ENCODE measurements at regions of chr1 and their contacts with region 1.

Region 1: DNA sequence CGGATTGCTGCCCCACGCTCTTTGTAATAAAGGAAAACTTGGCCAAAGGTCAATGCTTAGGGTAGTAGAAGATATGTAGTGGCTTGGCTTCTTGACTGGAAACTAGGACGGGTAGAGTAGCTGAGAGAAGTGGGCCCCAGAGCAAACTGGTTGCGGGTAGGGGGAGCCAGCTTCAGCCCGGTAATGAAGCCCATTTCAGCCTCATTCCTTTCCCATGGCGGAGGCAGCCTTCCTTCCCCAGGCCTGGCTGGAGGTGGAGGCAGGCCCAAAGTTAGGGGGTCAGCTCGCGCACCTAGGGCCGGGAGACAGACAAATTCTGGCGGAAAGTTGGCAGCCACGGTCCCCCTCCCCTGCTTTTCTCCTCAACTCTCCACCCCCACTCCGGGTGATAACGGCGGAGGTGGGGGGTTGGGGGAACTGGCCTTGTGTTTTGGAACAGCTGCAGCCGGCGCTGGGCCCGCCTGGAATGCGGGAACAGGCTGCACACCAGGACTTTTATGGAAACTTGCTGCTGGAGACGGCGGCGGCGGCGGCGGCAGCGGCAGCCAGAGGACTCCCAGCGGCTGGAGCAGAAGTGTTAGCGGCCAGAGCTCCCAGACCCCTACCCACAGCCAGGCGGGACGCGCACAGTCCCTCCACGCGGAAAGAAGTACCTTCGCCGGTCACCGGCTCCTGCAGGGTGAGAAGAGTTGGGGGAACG is at the start of gene NEXN:
- DNase-seq: peak; percentile 80
- H3K4me3 ChIP-seq: peak within 1 kb of the TSS; percentile 85 to 96 (median 88)
- H3K27ac ChIP-seq: peak within 1 kb of the TSS; percentile 96
- H3K4me1 ChIP-seq: peaks cover 19% of the 10 kb centered on the region
- H3K27me3 ChIP-seq: no peaks in the 10 kb centered on the region
- CTCF ChIP-seq: no peak
- POLR2A ChIP-seq: no peak
- total RNA-seq, gene NEXN: 11.7 and 14.2 TPM in 2 replicates

Region 2: DNA sequence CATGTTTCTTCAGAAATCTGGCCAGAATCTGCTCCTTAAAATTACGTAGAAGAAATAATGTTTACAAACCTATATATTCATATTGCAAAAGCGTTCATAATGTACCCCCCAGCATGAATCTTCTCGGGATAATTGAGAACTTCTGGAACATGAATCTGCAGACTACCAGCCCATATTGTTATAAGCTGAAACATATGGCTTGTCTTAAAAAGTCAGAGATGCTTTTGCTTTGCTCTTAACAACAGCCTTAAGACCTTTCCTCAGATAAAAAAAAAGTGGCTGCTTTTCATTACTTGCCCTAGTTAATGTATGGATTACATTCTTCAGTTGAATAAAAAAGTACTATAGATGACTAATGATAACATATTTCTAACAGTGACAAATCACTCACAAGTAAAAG is 190.8 kb before region 1 on chr1:
- CTCF ChIA-PET with region 1: no interaction called
- POLR2A ChIA-PET with region 1: no interaction called
- dilution Hi-C with region 1: no loop called
- intact Hi-C with region 1: no loop called
- DNase-seq: no peak
- H3K4me3 ChIP-seq: no peak overlapping the region
- H3K27ac ChIP-seq: no peak overlapping the region
- H3K4me1 ChIP-seq: no peaks in the 10 kb centered on the region
- H3K27me3 ChIP-seq: no peaks in the 10 kb centered on the region
- CTCF ChIP-seq: no peak
- POLR2A ChIP-seq: no peak

Region 3: DNA sequence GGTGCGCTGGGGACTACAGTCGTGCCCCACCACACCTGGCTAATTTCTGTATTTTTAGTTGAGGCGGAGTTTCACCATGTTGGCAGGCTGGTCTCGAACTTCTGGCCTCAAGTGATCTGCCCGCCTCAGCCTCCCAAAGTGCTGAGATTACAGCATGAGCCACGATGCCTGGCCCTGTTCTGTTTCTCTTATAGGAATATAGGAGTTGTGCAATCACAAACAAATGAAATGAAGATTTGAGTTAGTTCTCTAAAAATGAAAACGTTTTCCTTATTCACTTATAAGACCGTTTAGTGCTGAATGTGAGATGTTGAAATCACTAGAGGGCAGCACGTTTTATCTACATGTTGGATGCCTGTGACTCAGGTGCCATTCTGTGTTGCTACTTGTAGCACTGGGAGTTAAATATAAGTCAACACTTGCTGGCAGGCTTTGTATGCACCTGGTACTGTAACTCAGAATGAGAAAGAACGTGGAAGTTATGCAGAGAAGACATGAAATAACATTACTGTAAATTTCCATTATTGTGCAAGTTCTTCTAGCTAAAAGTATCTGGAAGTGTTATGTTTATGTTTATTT is 63.0 kb before region 1 on chr1:
- CTCF ChIA-PET with region 1: interaction called, 6 read pairs
- POLR2A ChIA-PET with region 1: interaction called, 5 read pairs
- dilution Hi-C with region 1: no loop called
- intact Hi-C with region 1: loop called (anchors 2 kb)
- DNase-seq: peak; percentile 76
- H3K4me3 ChIP-seq: no peak overlapping the region
- H3K27ac ChIP-seq: no peak overlapping the region
- H3K4me1 ChIP-seq: peaks cover 8% of the 10 kb centered on the region
- H3K27me3 ChIP-seq: no peaks in the 10 kb centered on the region
- CTCF ChIP-seq: peak in 1 of 2 donors; percentile 20
- POLR2A ChIP-seq: no peak

Region 4: DNA sequence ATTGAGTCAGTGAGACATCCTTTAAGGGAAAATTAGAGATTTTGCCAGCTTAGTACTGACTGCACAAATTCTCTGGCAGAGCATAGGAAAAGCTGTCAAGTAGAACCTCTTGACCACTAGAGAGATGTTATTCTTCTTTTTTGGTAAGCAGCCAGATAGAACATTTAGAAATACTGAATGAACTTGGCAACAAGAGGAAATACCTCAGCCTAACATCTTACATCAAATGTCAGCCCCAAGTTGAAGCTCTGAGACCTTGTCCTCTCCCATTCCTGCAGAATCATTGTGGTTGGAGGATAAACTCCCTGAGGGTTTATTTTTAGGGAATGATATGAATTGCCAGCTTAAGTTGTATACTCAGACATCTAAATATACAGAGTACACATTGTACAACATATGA is 55.3 kb before region 1 on chr1:
- CTCF ChIA-PET with region 1: no interaction called
- POLR2A ChIA-PET with region 1: interaction called, 3 read pairs
- dilution Hi-C with region 1: no loop called
- intact Hi-C with region 1: loop called (anchors 1 kb)
- DNase-seq: peak; percentile 90
- H3K4me3 ChIP-seq: no peak overlapping the region
- H3K27ac ChIP-seq: peak overlapping the region; percentile 86
- H3K4me1 ChIP-seq: peaks cover 45% of the 10 kb centered on the region
- H3K27me3 ChIP-seq: no peaks in the 10 kb centered on the region
- CTCF ChIP-seq: no peak
- POLR2A ChIP-seq: no peak

Measured in endothelial cell of umbilical vein (primary cell).